CD4-positive, alpha-beta memory T cell (primary cell): ENCODE measurements at regions of chr6 and their contacts with region 1.

Region 1: GRCh38 chr6:142784344-142784743 is 160.6 kb downstream of the HIVEP2 start:
- DNase-seq: no peak
- H3K4me3 ChIP-seq: no peak overlapping the region
- H3K4me3 Mint-ChIP-seq: peak overlapping the region in 2 of 8 donors; percentile 24 to 78
- H3K27ac ChIP-seq: no peak overlapping the region
- H3K27ac Mint-ChIP-seq: peak overlapping the region; percentile 48 to 89 (median 60)
- H3K4me1 ChIP-seq: peaks cover 78% of the 10 kb centered on the region
- H3K4me1 Mint-ChIP-seq: peaks cover 40 to 73% (median 58%) of the 10 kb centered on the region in 4 donors
- H3K27me3 ChIP-seq: no peaks in the 10 kb centered on the region
- H3K27me3 Mint-ChIP-seq: no peaks in the 10 kb centered on the region

Region 2: DNA sequence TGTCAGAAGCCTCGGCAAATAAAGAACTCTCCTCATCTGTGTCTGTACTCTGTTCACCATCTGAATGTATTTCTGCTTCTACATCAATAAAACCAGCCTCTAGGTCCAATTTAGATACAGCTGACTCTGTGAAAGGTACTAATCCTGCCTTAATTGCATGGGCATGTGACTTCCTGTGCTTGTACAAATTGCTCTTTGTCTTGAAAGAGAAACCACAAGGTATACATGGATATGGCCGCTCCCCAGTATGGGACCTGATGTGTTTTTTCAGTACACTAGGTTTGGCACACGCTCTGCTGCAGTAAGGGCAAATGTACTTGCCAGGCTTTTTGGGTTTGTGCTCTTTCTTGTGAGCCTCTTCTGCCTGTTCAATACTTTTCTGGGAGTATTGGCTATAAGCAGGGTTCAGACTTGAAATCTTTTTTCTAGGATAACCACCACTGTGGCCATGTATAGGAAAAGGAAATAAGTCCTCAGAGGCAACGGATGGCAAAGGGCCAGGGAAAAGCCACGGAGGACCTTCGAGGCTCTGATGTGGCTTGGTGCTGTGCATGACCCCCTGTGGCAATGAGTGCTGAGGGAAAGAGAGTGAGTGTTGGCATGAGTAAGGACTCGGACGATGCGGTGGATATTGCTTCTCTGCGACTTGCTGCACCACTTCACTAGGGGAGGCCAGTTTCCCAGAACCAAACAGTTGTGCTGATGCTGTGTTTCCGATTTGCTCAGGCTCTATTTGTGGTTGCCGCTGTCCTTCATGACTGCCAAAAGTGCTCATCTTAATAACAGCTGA is 10.3 kb before region 1 on chr6:
- CTCF ChIA-PET with region 1: interaction called, 5 read pairs
- POLR2A ChIA-PET with region 1: interaction called, 5 read pairs
- intact Hi-C with region 1: loop called (anchors 1 kb)
- DNase-seq: peak; percentile 45 to 57 (median 50)
- H3K4me3 ChIP-seq: peak overlapping the region in 1 of 2 donors; percentile 32
- H3K4me3 Mint-ChIP-seq: peak overlapping the region; percentile 57 to 88 (median 74)
- H3K27ac ChIP-seq: peak overlapping the region; percentile 53
- H3K27ac Mint-ChIP-seq: peak overlapping the region; percentile 74 to 93 (median 87)
- H3K4me1 ChIP-seq: peaks cover 38% of the 10 kb centered on the region
- H3K4me1 Mint-ChIP-seq: peaks cover 38 to 72% (median 54%) of the 10 kb centered on the region in 4 donors
- H3K27me3 ChIP-seq: no peaks in the 10 kb centered on the region
- H3K27me3 Mint-ChIP-seq: no peaks in the 10 kb centered on the region